ENCODE measurements at regions of chr20 and their contacts with region 1.

Region 1: GRCh38 chr20:45373353-45374100 is 4.6 kb downstream of the TP53TG5 start:
- DNase-seq: peak; percentile 96
- ATAC-seq: peak; percentile 97
- H3K4me3 Mint-ChIP-seq: peak overlapping the region; percentile 75
- H3K27ac Mint-ChIP-seq: peak overlapping the region; percentile 91
- H3K4me1 Mint-ChIP-seq: peaks cover 29% of the 10 kb centered on the region
- H3K27me3 Mint-ChIP-seq: no peaks in the 10 kb centered on the region

Region 2: DNA sequence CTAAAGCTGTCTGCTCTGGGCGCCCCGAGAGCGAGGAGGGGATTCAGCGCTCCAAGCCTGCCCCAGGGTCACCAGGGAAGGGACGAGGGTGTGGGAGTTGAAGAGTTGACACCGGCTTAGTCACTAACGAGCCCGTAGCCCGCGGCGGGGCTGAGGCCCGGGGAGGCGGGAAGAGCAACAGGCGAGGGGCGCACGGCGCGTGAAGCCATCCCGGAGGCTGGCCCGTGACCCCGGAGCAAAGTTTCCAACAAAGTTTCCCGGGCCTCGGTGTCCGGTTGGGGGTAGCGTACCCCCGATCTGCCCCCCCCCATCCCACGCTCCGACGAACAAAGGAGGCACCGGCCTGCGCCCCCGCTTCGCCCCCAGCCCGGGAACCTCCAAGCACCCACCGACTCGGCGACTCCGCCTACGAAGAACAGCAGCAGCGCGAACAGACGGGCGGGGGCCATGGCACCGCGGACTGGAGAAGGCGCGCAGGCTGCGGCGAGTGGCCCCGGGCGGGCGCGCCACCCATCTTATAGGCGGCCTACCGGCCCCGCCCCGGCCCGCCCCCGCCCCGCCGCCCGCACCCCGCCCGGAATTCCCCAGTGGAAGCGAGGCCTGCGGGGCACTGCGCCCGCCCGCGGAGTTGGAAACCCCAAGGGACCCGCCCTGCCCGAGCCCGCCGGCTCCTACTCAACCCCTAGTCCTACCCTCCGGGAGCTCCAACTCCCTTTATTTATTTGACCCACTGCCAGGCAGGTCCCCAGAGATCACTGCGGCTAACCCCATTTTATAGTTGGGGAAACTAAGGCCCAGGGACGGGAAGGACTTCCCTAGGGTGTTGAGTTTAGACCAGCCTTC is 25.4 kb before region 1 on chr20 and contains the start of gene SDC4:
- CTCF ChIA-PET with region 1: interaction called, 6 read pairs
- POLR2A ChIA-PET with region 1: no interaction called
- intact Hi-C with region 1: loop called in 1 of 2 experiments (anchors 1 kb)
- DNase-seq: peak; percentile 79
- ATAC-seq: peak; percentile 81
- H3K4me3 Mint-ChIP-seq: peak within 1 kb of the TSS; percentile 82
- H3K27ac Mint-ChIP-seq: peak within 1 kb of the TSS; percentile 81
- H3K4me1 Mint-ChIP-seq: peaks cover 44% of the 10 kb centered on the region
- H3K27me3 Mint-ChIP-seq: peaks cover 3% of the 10 kb centered on the region
- total RNA-seq, gene SDC4: 24.0 to 31.0 TPM

Region 3: DNA sequence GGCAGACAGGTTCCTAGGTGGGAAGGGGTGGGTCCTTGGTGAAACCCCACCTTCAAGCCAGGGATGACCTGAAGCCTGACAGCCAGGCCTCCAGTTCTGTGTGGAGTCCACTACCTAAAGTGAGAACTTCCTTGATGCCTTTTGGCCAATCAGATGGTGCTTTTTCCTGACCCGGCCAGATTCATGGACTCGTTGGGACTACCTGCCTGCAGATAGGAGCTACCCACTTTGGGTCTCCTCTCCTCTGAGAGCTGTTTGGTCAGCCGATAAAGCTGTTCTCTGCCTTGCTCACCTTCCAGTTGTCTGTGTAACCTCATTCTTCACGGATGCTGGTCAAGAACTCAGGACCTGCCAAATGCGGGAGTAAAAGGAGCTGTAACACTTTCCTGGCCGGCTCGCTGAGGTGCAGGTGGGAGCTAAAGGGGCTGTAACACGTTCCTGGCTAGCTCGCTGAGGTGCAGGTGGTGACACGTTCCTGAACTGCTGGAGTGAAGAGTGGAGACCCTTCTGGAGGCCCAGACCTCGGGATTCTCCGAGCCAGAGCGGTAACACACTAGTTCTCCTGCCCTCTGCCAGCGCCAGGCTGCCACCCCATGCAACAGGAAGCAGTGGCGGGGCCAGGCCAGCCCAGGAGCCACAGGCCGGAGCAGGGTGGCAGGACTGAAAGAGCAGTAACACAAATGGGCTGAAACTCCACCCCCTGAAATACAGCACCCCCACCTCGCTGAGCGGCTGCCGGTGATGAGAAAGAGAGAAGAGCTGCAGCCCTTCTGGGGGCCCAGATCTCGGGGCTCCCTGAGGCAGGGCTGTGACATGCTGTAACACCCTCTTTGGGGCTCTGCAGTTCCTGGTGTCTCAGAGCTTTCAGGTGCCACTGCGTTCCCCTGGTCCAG is 20.9 kb after region 1 on chr20:
- CTCF ChIA-PET with region 1: interaction called, 17 read pairs
- POLR2A ChIA-PET with region 1: no interaction called
- intact Hi-C with region 1: no loop called
- DNase-seq: no peak
- ATAC-seq: no peak
- H3K4me3 Mint-ChIP-seq: no peak overlapping the region
- H3K27ac Mint-ChIP-seq: no peak overlapping the region
- H3K4me1 Mint-ChIP-seq: peaks cover 8% of the 10 kb centered on the region
- H3K27me3 Mint-ChIP-seq: no peaks in the 10 kb centered on the region

Region 4: GRCh38 chr20:45415774-45416637 is 42.5 kb after region 1 on chr20 and contains the start of gene PIGT:
- CTCF ChIA-PET with region 1: interaction called, 32 read pairs
- POLR2A ChIA-PET with region 1: interaction called, 4 read pairs
- intact Hi-C with region 1: loop called in 1 of 2 experiments (anchors 1 kb)
- DNase-seq: peak; percentile 93
- ATAC-seq: peak; percentile 93
- H3K4me3 Mint-ChIP-seq: peak within 1 kb of the TSS; percentile 94
- H3K27ac Mint-ChIP-seq: peak within 1 kb of the TSS; percentile 97
- H3K4me1 Mint-ChIP-seq: peaks cover 44% of the 10 kb centered on the region
- H3K27me3 Mint-ChIP-seq: no peaks in the 10 kb centered on the region
- total RNA-seq, gene PIGT: 44.0 to 65.7 TPM

Region 5: DNA sequence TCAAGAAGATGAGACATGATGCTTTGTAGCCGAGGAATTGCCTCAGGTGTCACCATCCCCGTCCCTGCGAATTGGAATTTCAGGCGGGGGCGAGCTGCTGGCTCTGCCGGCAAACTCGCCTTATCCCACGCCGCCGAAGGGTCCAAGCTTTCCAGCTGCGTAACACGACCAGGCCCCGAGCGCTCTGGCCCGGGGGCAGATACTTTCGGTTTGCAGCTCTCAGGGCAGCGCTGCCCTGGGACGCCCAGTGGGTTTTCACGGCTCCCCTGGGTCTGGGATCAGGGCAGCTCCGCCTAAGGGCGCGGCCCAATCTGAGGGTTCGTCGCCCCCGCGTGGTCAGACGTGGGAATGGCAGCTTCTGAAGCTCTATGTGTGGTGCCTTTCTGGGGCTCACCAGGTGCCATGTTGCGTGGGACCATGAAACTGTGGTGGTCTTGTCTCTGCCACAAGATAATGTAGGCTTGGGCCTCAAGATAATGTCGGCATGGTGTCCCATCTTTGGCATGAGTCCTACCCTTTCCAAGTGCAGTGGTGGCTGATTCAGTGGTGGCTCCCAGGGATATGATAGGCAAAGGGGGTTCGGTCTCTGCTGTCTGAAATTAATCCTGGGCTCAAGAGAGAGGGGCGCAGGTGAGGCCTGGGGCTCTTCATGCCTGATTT is 63.3 kb after region 1 on chr20:
- CTCF ChIA-PET with region 1: interaction called, 189 read pairs
- POLR2A ChIA-PET with region 1: interaction called, 10 read pairs
- intact Hi-C with region 1: loop called (anchors 1 kb)
- DNase-seq: peak; percentile 91
- ATAC-seq: peak; percentile 99
- H3K4me3 Mint-ChIP-seq: peak overlapping the region; percentile 69
- H3K27ac Mint-ChIP-seq: no peak overlapping the region
- H3K4me1 Mint-ChIP-seq: peaks cover 17% of the 10 kb centered on the region
- H3K27me3 Mint-ChIP-seq: no peaks in the 10 kb centered on the region

Region 6: DNA sequence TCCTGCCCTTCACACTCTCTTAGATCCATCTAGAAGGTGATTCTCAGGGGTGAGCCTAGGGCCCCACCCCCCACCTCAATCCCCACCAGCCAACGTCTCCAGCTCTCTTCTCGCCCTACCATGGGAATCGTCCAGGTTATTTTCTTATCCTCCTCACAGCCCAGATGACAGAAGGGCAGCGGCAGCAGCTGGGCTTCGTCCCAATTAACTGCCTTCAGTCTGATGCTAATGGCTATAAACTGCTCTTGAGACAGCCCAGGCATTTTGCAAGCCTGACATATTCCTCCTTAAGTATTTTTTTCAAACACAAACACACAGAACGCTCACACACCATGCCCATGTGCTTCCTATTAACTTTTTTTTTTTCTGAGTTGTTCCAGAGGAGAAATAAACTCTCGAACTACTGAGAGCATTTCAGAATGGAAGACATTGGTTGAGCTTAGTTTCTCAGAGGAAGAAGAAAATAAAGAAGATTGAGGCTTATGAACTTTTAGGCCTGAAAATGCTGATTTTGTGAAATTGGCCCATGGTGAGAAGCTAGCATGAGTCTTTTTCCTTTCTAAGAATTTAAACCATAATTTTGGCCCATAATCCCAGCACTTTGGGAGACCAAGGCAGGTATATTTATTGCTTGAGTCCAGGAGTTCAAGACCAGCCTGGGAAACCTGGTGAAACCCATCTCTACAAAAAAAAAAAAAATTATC is 1645.7 kb after region 1 on chr20:
- CTCF ChIA-PET with region 1: no interaction called
- POLR2A ChIA-PET with region 1: no interaction called
- intact Hi-C with region 1: no loop called
- DNase-seq: no peak
- ATAC-seq: no peak
- H3K4me3 Mint-ChIP-seq: no peak overlapping the region
- H3K27ac Mint-ChIP-seq: no peak overlapping the region
- H3K4me1 Mint-ChIP-seq: no peaks in the 10 kb centered on the region
- H3K27me3 Mint-ChIP-seq: peaks cover 7% of the 10 kb centered on the region

Measured in activated CD4-positive, alpha-beta T cell treated with anti-CD3 and anti-CD28 coated beads for 36 hours (primary cell).